ENCODE measurements at regions of chr1 and their contacts with region 1.

Region 1: DNA sequence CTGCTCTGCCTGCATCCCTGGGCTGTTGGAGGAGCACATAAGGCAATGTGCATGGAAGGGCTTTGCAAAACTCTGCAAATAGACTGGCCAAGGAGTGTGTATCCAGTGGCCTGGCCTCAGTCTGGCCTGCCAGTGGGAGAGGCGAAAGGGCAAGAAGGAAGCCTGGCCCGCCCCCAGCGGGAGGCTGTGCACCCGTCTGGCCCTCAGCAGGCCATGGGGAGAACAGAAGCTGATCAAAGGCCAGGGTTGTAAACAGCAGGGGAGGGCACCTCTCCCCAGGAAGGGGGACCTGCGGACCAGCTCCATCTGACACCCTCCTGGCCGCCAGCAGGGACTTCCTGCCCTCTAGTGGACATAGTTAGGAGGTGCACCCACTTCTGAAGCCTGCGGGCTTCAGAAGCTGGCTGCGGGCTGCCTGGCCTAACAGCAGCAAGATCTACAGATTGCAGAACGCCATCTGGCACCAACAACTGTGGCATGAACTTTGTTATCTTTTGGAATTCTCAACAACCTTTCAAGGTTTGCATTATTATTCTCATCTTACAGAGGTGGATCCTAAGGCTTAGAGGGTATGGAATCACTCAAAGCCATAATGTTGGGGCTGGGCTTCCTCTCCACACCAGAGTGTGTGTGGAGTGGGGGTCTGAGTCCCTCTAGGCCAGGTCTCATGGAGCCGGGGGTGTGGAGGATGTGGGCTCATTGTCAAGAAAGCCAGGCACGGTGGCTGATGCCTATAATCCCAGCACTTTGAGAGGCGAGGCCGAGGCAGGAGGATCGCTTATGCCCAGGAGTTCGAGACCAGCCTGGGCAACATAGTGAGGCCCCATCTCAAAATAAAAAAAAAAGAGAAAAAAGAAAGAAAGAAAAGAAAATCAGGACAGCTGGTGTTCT is 18.9 kb upstream of the CDK18 start:
- DNase-seq: peak; percentile 67 to 90
- H3K4me3 ChIP-seq: peak overlapping the region in 1 of 4 experiments; percentile 28; a peak in 1 of 8 replicates
- H3K27ac ChIP-seq: no peak overlapping the region
- H3K4me1 ChIP-seq: peaks cover 0 to 16% (median 8%) of the 10 kb centered on the region in 4 experiments; a peak in 6 of 7 replicates
- H3K27me3 ChIP-seq: peaks cover 0 to 11% (median 4%) of the 10 kb centered on the region in 4 experiments; a peak in 4 of 7 replicates
- CTCF ChIP-seq: peak; percentile 96 to 98 (median 97)
- EP300 ChIP-seq: peak in 1 of 2 experiments; percentile 53; a peak in 1 of 3 replicates
- POLR2A ChIP-seq: no peak
- RAD21 ChIP-seq: peak; percentile 96 to 99

Region 2: DNA sequence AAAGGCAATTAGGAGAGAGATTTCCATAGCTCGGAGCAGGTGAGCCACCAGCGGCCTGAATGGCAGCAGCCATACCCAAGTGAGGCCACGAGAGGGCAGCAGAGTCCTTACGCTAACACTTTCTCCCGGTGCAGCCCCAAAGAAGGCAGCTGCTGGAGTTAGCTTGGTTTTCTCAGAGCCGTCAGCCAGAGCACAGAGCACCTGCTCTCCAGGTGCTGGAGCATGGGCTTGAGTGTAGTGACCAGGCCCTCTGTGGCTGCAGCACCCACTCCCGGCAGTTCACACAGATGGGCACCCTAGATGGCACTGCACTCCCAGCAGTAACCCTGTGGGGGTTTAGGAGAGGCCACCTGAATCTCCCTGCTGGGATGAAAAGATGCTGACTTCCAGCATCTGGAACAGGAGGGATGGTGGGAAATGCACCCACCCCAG is 212.0 kb before region 1 on chr1:
- CTCF ChIA-PET with region 1: interaction called, 16 read pairs
- POLR2A ChIA-PET with region 1: no interaction called
- DNase-seq: peak; percentile 83 to 94
- H3K4me3 ChIP-seq: no peak overlapping the region
- H3K27ac ChIP-seq: 0 out of 2 replicates have a peak overlapping the region, but pooled peaks have one; percentile 0
- H3K4me1 ChIP-seq: peaks cover 5 to 19% (median 11%) of the 10 kb centered on the region in 4 experiments; a peak in 6 of 7 replicates
- H3K27me3 ChIP-seq: no peaks in the 10 kb centered on the region
- CTCF ChIP-seq: peak in 2 of 3 experiments; percentile 96 to 100; a peak in 3 of 4 replicates
- EP300 ChIP-seq: no peak
- POLR2A ChIP-seq: no peak
- RAD21 ChIP-seq: peak; percentile 99 to 100

Region 3: DNA sequence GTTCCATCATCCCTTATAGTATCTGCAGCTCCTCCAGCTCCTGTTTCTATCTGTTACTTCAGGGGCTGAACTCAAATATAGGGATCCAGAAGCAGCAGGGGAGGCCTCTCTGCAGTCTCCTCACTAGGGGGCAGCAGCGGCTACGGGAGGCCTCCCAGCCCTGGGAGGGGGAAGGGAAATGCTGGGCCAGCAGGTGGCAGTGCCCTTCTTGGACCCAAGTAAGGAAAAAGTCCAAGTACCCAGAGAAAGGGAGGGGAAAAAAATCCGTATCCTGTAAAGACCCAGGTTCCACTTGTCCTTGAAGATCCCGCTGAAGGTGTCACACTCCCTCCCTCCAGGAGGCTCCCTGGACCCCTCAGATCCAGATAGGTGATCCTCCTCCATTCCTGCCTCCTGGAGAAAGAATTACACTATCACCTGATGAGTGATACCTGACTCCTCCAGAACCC is 149.9 kb before region 1 on chr1:
- CTCF ChIA-PET with region 1: interaction called, 29 read pairs
- POLR2A ChIA-PET with region 1: no interaction called
- DNase-seq: peak; percentile 78 to 91
- H3K4me3 ChIP-seq: no peak overlapping the region
- H3K27ac ChIP-seq: no peak overlapping the region
- H3K4me1 ChIP-seq: peaks cover 0 to 3% (median under 1%) of the 10 kb centered on the region in 4 experiments; a peak in 4 of 7 replicates
- H3K27me3 ChIP-seq: no peaks in the 10 kb centered on the region; a peak in 3 of 7 replicates
- CTCF ChIP-seq: peak; percentile 93 to 99 (median 94)
- EP300 ChIP-seq: no peak
- POLR2A ChIP-seq: no peak
- RAD21 ChIP-seq: peak; percentile 78 to 89

Region 4: GRCh38 chr1:205382561-205382960 is 103.0 kb before region 1 on chr1:
- CTCF ChIA-PET with region 1: interaction called, 69 read pairs
- POLR2A ChIA-PET with region 1: no interaction called
- DNase-seq: peak in 1 of 2 experiments; percentile 44
- H3K4me3 ChIP-seq: no peak overlapping the region
- H3K27ac ChIP-seq: no peak overlapping the region
- H3K4me1 ChIP-seq: peaks cover 0 to 3% (median 0%) of the 10 kb centered on the region in 4 experiments; a peak in 1 of 7 replicates
- H3K27me3 ChIP-seq: no peaks in the 10 kb centered on the region
- CTCF ChIP-seq: no peak
- EP300 ChIP-seq: no peak
- POLR2A ChIP-seq: no peak
- RAD21 ChIP-seq: no peak

Region 5: GRCh38 chr1:205416322-205416721 is 69.3 kb before region 1 on chr1:
- CTCF ChIA-PET with region 1: interaction called, 302 read pairs
- POLR2A ChIA-PET with region 1: no interaction called
- DNase-seq: no peak
- H3K4me3 ChIP-seq: no peak overlapping the region
- H3K27ac ChIP-seq: no peak overlapping the region
- H3K4me1 ChIP-seq: no peaks in the 10 kb centered on the region
- H3K27me3 ChIP-seq: no peaks in the 10 kb centered on the region
- CTCF ChIP-seq: no peak
- EP300 ChIP-seq: no peak
- POLR2A ChIP-seq: no peak
- RAD21 ChIP-seq: no peak

Region 6: DNA sequence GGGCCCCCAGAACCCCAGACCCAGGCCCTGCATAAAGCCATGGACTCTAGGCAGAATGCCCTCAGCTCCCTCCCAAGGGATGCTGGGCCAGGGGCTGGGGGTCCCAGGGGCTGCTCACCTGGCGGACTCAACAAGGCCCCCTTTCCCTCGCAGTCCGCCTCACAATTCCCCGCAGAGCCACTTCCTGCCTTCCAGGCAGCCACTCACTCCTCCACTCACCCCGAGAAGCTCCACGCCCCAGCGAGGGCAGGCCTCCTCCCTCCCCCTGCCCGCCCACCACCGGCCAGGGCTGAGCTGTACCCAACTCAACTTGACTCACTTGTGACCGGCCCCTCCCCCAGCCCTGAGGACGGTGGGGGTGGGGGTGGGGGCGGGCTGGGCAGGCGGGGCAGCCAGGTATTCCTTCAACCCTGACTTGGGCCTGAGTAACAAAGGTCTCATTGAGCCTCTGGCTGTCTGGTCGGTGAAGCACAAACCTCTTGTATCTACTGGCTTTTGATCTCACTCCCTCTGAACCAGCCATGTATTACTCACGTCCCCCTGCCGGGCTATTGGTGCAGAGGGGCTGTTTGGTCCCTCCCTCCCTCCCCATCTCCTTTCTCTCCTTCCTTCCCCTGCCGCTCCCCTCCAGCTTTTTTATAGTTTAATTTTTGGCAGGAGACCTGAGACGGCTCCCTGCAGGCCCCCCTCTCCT is 35.7 kb before region 1 on chr1:
- CTCF ChIA-PET with region 1: interaction called, 767 read pairs
- POLR2A ChIA-PET with region 1: interaction called, 12 read pairs
- DNase-seq: peak in 1 of 2 experiments; percentile 77
- H3K4me3 ChIP-seq: peak overlapping the region; percentile 14 to 52 (median 28); a peak in 5 of 8 replicates
- H3K27ac ChIP-seq: no peak overlapping the region; the same call in 1 of the 2 replicates
- H3K4me1 ChIP-seq: peaks cover 46 to 88% (median 62%) of the 10 kb centered on the region in 4 experiments
- H3K27me3 ChIP-seq: peaks cover 0 to 5% (median 1%) of the 10 kb centered on the region in 4 experiments; a peak in 2 of 7 replicates
- CTCF ChIP-seq: peak in 1 of 3 experiments; percentile 4; a peak in 1 of 4 replicates
- EP300 ChIP-seq: no peak
- POLR2A ChIP-seq: peak in 1 of 2 experiments; percentile 45; a peak in 1 of 3 replicates
- RAD21 ChIP-seq: no peak

Measured in H1 (cell line).